ENCODE measurements at regions of chr16 and their contacts with region 1.

Region 1: DNA sequence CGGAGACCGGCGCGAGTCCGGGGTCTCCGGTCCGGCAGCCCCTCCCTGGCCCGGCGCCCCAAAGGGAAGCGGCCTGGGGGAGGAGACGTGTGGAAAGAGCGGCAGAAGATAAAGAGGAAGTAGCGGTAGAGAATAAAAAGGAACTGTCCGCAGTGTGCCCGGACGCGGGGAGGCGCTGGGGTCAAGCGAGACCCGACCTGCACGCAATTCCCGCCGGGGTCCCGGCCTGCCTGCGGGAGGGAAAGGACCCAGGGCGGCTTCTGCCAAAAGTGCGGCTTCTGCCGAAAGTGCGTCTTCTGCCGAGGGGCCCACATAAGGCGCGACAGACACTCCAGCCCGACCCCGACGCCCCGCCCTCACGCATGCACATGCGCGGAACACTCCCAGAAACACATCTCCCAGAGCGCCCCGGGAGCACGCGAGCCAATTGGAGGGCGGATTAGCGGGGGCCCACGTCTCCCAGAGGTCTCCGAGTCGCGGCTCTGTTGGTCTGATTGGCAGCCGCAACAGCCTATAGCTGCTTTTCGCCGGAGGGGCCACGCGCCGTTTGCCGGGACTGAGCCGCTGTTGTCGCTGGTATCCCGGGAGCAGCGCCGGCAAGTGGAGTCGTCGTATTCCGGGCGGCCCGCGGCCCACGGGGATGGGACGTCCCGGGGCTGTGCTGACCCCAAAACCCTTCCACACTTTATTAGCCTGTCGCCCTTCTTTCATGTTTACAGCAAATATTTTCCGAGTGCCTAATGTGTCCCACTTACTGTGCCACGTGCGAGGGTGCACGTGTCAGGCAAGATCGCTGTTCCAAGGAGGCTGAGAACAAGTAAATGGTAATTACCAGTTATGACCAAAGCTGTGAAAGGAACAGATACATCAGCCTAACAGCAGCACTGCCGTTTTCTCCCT is 8.0 kb upstream of the MEFV start:
- DNase-seq: peak; percentile 93 to 96 (median 95)
- H3K4me3 ChIP-seq: peak overlapping the region; percentile 12 to 95
- H3K4me3 Mint-ChIP-seq: peak overlapping the region; percentile 88 to 98 (median 90)
- H3K27ac ChIP-seq: peak overlapping the region; percentile 92
- H3K27ac Mint-ChIP-seq: peak overlapping the region; percentile 90 to 96 (median 93)
- H3K4me1 ChIP-seq: peaks cover 25% of the 10 kb centered on the region
- H3K4me1 Mint-ChIP-seq: peaks cover 23 to 46% (median 33%) of the 10 kb centered on the region in 4 donors
- H3K27me3 ChIP-seq: no peaks in the 10 kb centered on the region
- H3K27me3 Mint-ChIP-seq: no peaks in the 10 kb centered on the region

Region 2: DNA sequence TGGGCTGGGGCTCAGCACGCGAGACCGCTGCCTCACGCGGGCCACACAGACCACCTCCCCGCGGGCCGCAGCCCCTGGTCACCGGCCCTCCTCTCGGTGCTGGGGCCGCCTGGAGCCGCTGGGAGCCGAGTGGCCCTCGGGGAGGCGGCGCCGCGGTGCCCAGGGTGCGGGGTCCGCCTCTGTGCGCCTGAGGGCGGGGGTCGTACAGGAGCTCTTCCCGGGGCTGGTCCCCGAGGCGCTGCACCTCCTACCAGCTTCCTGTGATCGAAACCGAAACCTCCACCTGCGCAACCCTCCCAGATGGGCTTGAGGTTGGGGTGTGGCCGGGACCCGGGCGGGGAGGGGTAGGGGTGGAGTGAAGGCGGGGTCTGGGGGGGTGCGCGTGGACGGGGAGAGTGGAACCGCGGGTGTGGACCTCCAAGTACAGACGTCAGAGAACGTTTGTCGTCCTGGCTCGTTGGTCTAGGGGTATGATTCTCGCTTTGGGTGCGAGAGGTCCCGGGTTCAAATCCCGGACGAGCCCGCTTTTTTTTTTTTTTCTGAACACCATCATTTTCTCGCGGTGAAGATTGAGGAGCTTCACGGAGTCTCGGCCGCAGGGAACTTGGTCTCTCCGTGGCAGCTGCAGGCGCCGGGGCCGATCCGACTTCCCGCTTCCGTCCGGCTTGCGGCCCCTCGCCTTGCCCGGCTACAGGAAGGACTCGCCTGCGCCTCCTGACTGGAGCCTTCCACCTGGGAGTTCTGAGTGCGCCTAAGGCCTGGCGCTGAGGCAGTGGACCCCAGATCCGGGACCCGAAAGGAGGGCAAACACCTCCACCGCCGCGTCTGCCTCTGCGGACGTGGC is 105.7 kb before region 1 on chr16:
- CTCF ChIA-PET with region 1: no interaction called
- POLR2A ChIA-PET with region 1: interaction called, 6 read pairs
- intact Hi-C with region 1: loop called (anchors 1 kb)
- DNase-seq: peak; percentile 92 to 98 (median 94)
- H3K4me3 ChIP-seq: peak overlapping the region; percentile 65 to 66
- H3K4me3 Mint-ChIP-seq: peak overlapping the region; percentile 83 to 96 (median 92)
- H3K27ac ChIP-seq: peak overlapping the region; percentile 62
- H3K27ac Mint-ChIP-seq: peak overlapping the region; percentile 92 to 100 (median 96)
- H3K4me1 ChIP-seq: peaks cover 25% of the 10 kb centered on the region
- H3K4me1 Mint-ChIP-seq: peaks cover 11 to 36% (median 25%) of the 10 kb centered on the region in 4 donors
- H3K27me3 ChIP-seq: no peaks in the 10 kb centered on the region
- H3K27me3 Mint-ChIP-seq: peaks cover 0 to 2% of the 10 kb centered on the region in 2 donors

Region 3: DNA sequence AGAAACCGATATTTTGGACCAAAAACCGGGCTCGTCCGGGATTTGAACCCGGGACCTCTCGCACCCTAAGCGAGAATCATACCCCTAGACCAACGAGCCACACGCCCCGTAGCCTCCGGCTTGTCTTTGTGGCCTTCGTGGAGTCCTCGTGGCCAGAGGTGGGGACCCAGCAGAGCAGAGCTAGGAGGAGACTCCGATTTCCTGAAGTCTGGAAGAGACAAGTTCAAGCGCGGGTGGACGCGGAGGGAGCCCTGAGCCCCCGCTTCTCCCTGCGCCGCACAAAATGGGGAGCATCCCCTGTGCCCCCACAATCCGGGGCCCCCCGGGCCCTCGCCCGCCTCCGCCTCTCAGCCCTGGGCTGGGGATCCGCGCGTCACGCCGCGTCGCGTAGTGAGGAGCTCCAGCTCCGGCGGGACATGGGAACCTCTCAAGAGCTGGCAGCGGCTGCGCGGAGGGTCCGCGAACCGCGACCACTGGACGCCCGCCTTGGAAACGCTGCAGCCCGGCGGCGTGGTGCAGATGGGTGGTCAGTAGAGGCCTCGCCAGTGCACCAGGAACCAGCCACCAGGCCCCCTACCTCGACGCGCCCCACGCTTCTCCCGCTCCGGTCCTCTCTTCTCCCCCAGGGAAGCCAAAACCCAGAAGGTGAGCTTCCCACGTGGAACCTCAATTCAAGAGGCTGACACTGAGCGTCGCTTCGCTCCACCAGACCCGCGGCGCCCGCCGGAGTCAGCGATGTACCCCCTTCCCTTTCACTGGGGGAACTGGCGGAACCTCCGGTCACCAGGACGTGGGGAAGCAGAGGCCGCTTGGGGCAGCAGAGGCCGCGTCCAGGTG is 81.6 kb before region 1 on chr16:
- CTCF ChIA-PET with region 1: interaction called, 4 read pairs
- POLR2A ChIA-PET with region 1: interaction called, 10 read pairs
- intact Hi-C with region 1: loop called (anchors 2 kb)
- DNase-seq: peak in 3 of 5 donors; percentile 35 to 54 (median 45)
- H3K4me3 ChIP-seq: peak overlapping the region in 1 of 2 donors; percentile 45
- H3K4me3 Mint-ChIP-seq: peak overlapping the region; percentile 59 to 86 (median 73)
- H3K27ac ChIP-seq: no peak overlapping the region
- H3K27ac Mint-ChIP-seq: peak overlapping the region in 5 of 7 donors; percentile 37 to 89 (median 80)
- H3K4me1 ChIP-seq: peaks cover 23% of the 10 kb centered on the region
- H3K4me1 Mint-ChIP-seq: peaks cover 16 to 35% (median 21%) of the 10 kb centered on the region in 4 donors
- H3K27me3 ChIP-seq: peaks cover 52% of the 10 kb centered on the region
- H3K27me3 Mint-ChIP-seq: peaks cover 55 to 66% of the 10 kb centered on the region in 2 donors

Region 4: GRCh38 chr16:3234543-3235541 is 29.5 kb before region 1 on chr16 and contains the start of gene ZNF200:
- CTCF ChIA-PET with region 1: no interaction called
- POLR2A ChIA-PET with region 1: interaction called, 32 read pairs
- intact Hi-C with region 1: loop called (anchors 1 kb)
- DNase-seq: peak; percentile 92 to 96 (median 95)
- H3K4me3 ChIP-seq: peak within 1 kb of the TSS; percentile 91 to 94
- H3K4me3 Mint-ChIP-seq: peak within 1 kb of the TSS; percentile 93 to 98 (median 96)
- H3K27ac ChIP-seq: peak within 1 kb of the TSS; percentile 88
- H3K27ac Mint-ChIP-seq: peak within 1 kb of the TSS; percentile 96 to 99 (median 98)
- H3K4me1 ChIP-seq: peaks cover 29% of the 10 kb centered on the region
- H3K4me1 Mint-ChIP-seq: peaks cover 17 to 41% (median 23%) of the 10 kb centered on the region in 4 donors
- H3K27me3 ChIP-seq: no peaks in the 10 kb centered on the region
- H3K27me3 Mint-ChIP-seq: no peaks in the 10 kb centered on the region
- total RNA-seq, gene ZNF200: 27.7 to 29.2 TPM

Region 5: DNA sequence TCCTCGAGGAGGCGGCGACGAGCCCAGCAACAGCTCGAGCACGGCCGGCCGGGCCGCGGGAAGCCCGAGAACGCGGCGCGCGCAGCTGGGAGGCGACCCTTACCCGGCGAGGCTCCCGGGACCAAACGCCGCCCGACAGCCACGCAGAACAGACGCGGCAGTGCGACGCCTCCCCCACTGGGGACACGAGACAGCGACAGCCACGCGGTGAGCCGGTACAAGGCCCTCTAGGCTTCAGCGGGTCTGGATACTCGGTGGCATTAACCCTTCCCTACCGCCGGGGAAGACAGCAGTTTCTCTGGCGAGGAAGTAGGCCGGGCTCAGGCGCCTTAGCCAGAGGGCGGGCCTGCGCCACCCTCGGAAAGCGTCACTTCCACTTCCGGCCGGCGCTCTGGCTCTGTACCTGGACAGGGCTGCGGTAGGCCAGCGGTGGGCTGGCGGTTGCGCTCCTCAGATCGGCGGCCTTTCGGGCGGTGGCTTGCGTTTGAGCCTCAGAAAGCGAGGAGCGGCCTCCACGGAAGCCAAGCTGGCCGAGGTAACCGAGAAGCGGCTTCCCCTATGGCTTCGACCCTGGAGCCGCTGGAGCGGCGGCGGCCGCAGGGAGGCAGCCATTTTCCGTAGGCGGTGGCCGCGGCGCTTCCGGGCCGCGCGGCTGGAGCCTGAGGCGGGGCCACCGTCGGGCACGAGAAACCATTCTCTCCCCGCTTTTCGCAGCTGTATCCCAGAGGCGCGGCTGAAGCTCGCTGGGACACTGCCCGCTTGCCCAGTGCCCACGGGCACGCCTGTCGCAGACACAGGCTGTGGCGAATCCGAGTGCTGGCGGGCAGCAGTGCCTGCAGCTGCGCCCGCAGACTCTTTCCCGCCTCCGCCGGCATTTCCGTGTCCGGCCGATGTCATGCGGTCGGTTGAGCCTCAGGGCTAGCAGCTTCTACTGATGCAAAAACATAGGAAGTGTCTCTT is 41.0 kb after region 1 on chr16 and contains the starts of genes TIGD7 and ZNF75A:
- CTCF ChIA-PET with region 1: no interaction called
- POLR2A ChIA-PET with region 1: interaction called, 23 read pairs
- intact Hi-C with region 1: loop called (anchors 1 kb)
- DNase-seq: peak; percentile 82 to 93 (median 85)
- H3K4me3 ChIP-seq: peak within 1 kb of the TSS; percentile 80 to 88
- H3K4me3 Mint-ChIP-seq: peak within 1 kb of the TSS; percentile 79 to 87 (median 85)
- H3K27ac ChIP-seq: peak within 1 kb of the TSS; percentile 70
- H3K27ac Mint-ChIP-seq: peak within 1 kb of the TSS; percentile 64 to 84 (median 82)
- H3K4me1 ChIP-seq: peaks cover 16% of the 10 kb centered on the region
- H3K4me1 Mint-ChIP-seq: peaks cover 7 to 13% (median 11%) of the 10 kb centered on the region in 4 donors
- H3K27me3 ChIP-seq: no peaks in the 10 kb centered on the region
- H3K27me3 Mint-ChIP-seq: no peaks in the 10 kb centered on the region
- total RNA-seq, gene TIGD7: 14.2 to 19.0 TPM
- total RNA-seq, gene ZNF75A: 82.7 to 88.1 TPM

Region 6: DNA sequence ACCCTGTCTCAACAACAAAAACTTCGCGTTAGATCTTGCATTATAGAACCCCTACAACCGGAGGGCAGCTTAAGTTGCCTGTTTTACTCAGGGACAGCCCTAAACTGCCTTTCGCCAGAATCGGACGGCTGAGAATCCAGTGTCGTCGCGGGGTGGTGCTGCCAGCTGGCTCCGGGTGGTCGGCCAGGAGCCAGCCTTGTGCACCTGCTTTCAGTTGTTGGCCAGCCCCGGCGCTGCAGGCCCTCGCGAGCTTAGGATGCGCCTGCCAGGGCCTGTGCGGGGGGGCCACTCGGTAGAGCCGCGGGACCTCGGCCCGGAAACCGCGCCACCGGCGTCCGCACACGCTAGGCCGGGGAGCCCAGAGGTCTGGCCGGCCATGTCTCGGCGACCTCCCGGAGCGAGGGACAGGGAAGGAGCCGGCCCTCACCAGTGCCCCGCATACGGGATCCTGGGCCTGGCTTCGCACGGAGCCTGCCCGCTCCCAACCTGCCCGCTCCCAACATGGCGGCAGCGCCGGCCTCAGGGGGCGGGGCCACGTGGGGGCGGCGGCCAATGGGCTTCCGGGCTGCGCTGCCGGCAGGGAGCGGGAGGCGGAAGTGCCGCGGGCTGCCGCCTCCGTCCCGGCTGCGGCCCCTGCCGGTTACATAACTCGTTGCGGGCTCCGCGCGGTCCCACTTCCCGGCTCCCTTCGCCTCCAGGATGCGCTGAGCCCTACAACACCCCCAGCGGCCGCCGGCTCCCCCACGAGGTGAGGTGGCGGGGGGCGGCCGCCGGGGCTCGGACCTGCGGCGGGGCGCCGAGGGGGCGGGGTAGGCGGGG is 193.3 kb after region 1 on chr16:
- CTCF ChIA-PET with region 1: interaction called, 3 read pairs
- POLR2A ChIA-PET with region 1: interaction called, 11 read pairs
- intact Hi-C with region 1: loop called (anchors 1 kb)
- DNase-seq: peak; percentile 90 to 95 (median 92)
- H3K4me3 ChIP-seq: peak overlapping the region; percentile 73 to 94
- H3K4me3 Mint-ChIP-seq: peak overlapping the region; percentile 79 to 89 (median 84)
- H3K27ac ChIP-seq: peak overlapping the region; percentile 88
- H3K27ac Mint-ChIP-seq: peak overlapping the region; percentile 83 to 93 (median 92)
- H3K4me1 ChIP-seq: peaks cover 48% of the 10 kb centered on the region
- H3K4me1 Mint-ChIP-seq: peaks cover 29 to 57% (median 46%) of the 10 kb centered on the region in 4 donors
- H3K27me3 ChIP-seq: no peaks in the 10 kb centered on the region
- H3K27me3 Mint-ChIP-seq: no peaks in the 10 kb centered on the region